Calu3 (cell line): ENCODE measurements at regions of chr10 and their contacts with region 1.

Region 1: GRCh38 chr10:60769406-60769805 is 8.9 kb upstream of the CDK1 start:
- DNase-seq: no peak
- H3K4me3 Mint-ChIP-seq: no peak overlapping the region
- H3K27ac Mint-ChIP-seq: no peak overlapping the region
- H3K4me1 Mint-ChIP-seq: peaks cover 14% of the 10 kb centered on the region
- H3K27me3 Mint-ChIP-seq: no peaks in the 10 kb centered on the region
- CTCF ChIP-seq: no peak

Region 2: DNA sequence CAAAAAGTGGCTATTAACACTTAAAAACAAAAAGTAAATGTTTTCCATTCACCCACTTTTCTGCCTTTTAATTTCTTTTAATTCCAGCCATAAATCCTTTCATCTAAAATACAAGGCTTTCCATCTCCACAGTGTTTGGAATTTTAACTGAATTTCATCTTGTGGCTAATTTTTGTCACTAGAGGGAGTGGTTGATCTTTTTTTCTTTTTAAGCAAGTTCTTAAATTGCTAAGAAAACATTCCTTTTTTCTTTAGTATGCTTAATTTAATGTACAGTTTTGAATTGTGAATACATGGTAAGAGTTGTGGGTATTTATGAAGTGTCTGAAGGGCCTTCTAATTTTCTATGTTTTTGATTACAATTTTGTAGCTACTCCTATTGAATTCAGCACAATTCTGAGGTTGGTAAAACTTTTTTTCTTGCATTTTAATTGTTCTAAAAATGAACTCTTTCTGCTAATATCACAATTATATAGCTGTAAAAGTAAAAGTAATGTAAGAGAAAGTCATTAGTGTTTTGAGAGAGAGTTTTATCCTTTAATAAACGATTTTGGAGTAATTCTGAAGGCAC is 324.8 kb before region 1 on chr10:
- CTCF ChIA-PET with region 1: interaction called, 3 read pairs
- intact Hi-C with region 1: loop called (anchors 1 kb)
- DNase-seq: no peak
- H3K4me3 Mint-ChIP-seq: no peak overlapping the region
- H3K27ac Mint-ChIP-seq: no peak overlapping the region
- H3K4me1 Mint-ChIP-seq: peaks cover 27% of the 10 kb centered on the region
- H3K27me3 Mint-ChIP-seq: no peaks in the 10 kb centered on the region
- CTCF ChIP-seq: peak; percentile 61

Region 3: GRCh38 chr10:60549686-60550085 is 219.7 kb before region 1 on chr10:
- CTCF ChIA-PET with region 1: no interaction called
- intact Hi-C with region 1: loop called (anchors 1 kb)
- DNase-seq: peak; percentile 5
- H3K4me3 Mint-ChIP-seq: no peak overlapping the region
- H3K27ac Mint-ChIP-seq: no peak overlapping the region
- H3K4me1 Mint-ChIP-seq: no peaks in the 10 kb centered on the region
- H3K27me3 Mint-ChIP-seq: no peaks in the 10 kb centered on the region
- CTCF ChIP-seq: peak; percentile 62

Region 4: GRCh38 chr10:60589376-60589775 is 180.0 kb before region 1 on chr10:
- CTCF ChIA-PET with region 1: no interaction called
- intact Hi-C with region 1: no loop called
- DNase-seq: no peak
- H3K4me3 Mint-ChIP-seq: no peak overlapping the region
- H3K27ac Mint-ChIP-seq: no peak overlapping the region
- H3K4me1 Mint-ChIP-seq: no peaks in the 10 kb centered on the region
- H3K27me3 Mint-ChIP-seq: no peaks in the 10 kb centered on the region
- CTCF ChIP-seq: no peak

Region 5: GRCh38 chr10:60733189-60733822 is 36.1 kb before region 1 on chr10:
- CTCF ChIA-PET with region 1: interaction called, 5 read pairs
- intact Hi-C with region 1: loop called (anchors 2 kb)
- DNase-seq: peak; percentile 89
- H3K4me3 Mint-ChIP-seq: peak overlapping the region; percentile 80
- H3K27ac Mint-ChIP-seq: no peak overlapping the region
- H3K4me1 Mint-ChIP-seq: peaks cover 19% of the 10 kb centered on the region
- H3K27me3 Mint-ChIP-seq: no peaks in the 10 kb centered on the region
- CTCF ChIP-seq: peak; percentile 87